ENCODE measurements at regions of chr10 and their contacts with region 1.

Region 1: GRCh38 chr10:79347226-79347893 is at the start of gene PPIF:
- DNase-seq: peak; percentile 92
- H3K4me3 Mint-ChIP-seq: peak within 1 kb of the TSS; percentile 93
- H3K27ac Mint-ChIP-seq: peak within 1 kb of the TSS; percentile 91
- H3K4me1 Mint-ChIP-seq: peaks cover 40% of the 10 kb centered on the region
- H3K27me3 Mint-ChIP-seq: no peaks in the 10 kb centered on the region
- total RNA-seq, gene PPIF: 119 and 120 TPM in 2 replicates

Region 2: DNA sequence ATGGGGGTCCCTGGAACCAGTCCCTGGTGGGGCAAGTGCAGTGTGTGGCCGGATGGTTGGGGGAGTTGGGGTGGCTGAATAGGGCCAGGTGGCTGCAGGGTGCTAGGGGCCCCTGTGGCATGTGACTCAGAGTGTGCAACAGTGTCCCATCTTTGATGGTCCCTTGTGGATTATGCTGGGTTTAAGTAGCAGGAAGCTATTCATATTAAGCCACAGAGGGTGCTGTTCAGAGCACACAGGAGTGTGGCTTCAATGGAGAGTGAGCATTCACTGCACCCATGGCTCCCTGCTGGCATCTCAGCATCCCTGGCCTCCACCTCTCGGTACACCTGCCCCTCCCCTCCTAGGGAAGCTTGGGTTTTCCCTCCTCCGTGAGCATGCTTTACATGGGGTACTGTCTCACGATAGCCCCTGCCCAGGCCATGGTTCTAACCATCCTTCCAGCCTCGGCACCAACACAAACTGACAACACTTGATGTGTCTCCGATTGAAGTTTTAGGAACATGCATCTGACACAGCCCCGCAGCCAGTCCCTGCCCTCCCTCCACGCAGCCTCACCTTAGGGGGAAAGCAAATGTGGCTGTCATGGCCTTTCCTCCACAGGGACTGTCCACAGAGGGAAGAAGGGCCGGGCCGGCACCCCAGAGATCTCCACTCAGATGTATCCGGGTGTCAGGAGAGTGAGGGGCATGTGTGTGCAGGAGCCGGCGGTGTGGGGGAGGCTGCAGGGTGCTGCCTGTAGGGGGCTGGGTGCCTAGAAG is 30.5 kb before region 1 on chr10:
- intact Hi-C with region 1: loop called (anchors 2 kb)
- DNase-seq: no peak
- H3K4me3 Mint-ChIP-seq: peak overlapping the region; percentile 52
- H3K27ac Mint-ChIP-seq: peak overlapping the region; percentile 81
- H3K4me1 Mint-ChIP-seq: peaks cover 62% of the 10 kb centered on the region
- H3K27me3 Mint-ChIP-seq: no peaks in the 10 kb centered on the region

Region 3: DNA sequence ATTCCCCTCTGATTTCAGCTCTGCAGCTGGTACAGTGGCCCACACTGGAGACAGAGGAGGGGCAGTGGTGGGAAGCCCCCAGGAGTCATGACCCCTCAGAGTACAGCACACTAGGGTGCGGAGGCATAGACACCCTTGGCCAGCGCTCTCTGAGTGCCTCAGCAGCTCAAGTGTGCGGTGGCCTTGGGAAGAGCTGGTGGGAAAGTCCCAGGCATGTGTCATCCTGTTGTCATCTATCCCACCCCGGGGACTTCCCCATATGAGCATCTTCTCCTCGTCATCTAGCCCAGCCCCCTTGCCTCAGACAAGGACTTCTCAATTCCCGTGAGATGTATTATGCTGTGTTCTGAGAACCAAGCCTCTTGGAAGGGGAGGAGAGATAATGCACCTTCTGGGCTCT is 15.7 kb before region 1 on chr10:
- intact Hi-C with region 1: loop called (anchors 1 kb)
- DNase-seq: peak; percentile 71
- H3K4me3 Mint-ChIP-seq: peak overlapping the region; percentile 11
- H3K27ac Mint-ChIP-seq: peak overlapping the region; percentile 90
- H3K4me1 Mint-ChIP-seq: peaks cover 37% of the 10 kb centered on the region
- H3K27me3 Mint-ChIP-seq: no peaks in the 10 kb centered on the region

Region 4: GRCh38 chr10:79445141-79445976 is 98.0 kb after region 1 on chr10 and contains the start of gene ZCCHC24:
- intact Hi-C with region 1: loop called (anchors 5 kb)
- DNase-seq: peak; percentile 94
- H3K4me3 Mint-ChIP-seq: peak within 1 kb of the TSS; percentile 82
- H3K27ac Mint-ChIP-seq: peak within 1 kb of the TSS; percentile 21
- H3K4me1 Mint-ChIP-seq: peaks cover 21% of the 10 kb centered on the region
- H3K27me3 Mint-ChIP-seq: peaks cover 34% of the 10 kb centered on the region
- total RNA-seq, gene ZCCHC24: 2.1 and 2.6 TPM in 2 replicates